CD8-positive, alpha-beta T cell (primary cell): ENCODE measurements at regions of chr9 and their contacts with region 1.

Region 1: DNA sequence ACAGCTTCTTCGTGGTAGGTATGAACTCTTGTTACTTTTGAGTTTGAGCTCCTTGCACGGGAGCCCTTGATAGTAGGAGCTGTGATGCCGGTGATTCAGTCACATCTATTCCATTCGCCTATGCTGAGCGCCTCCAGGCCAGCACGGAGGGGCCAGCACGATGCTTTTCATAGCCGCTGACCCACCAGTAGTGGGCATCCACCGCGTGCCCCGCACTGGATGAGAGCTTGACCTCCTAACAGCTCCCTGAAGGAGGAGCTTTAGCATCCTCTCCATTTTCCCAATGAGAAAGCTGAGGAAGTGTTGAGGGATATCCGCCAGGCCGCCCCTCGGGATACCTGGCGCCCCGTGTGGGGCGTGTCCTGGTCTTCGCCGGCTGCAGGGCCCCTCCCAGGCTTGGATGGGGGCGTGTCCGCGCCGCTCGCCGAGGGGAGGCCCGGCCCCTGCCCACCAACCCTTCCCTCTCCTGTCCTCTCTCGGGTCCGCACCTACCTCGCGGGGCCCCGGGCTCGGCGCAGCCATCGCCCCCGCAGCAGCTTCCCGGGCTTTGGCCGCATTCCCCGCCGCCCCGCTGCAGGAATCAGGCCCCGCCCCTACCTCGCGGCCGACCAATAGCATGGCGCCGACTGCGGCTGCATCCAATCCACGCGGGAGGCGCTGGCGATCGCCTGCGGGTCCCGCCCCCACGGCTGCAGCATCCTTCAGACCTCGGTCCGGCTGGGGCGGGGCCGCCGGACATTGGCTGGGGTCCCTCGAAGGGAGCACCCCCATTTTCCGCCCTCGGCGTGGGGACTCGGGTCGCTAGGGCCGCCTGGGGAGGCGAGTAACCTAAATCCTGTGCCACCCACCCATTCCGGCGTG is at the start of gene PIP5KL1:
- DNase-seq: peak; percentile 45 to 83 (median 68)
- ATAC-seq: peak; percentile 60
- H3K4me3 ChIP-seq: peak within 1 kb of the TSS; percentile 40 to 53
- H3K4me3 Mint-ChIP-seq: peak within 1 kb of the TSS; percentile 69
- H3K27ac ChIP-seq: no peak within 1 kb of the TSS
- H3K27ac Mint-ChIP-seq: peak within 1 kb of the TSS; percentile 71
- H3K4me1 ChIP-seq: peaks cover 36% of the 10 kb centered on the region
- H3K4me1 Mint-ChIP-seq: peaks cover 35% of the 10 kb centered on the region
- H3K27me3 ChIP-seq: peaks cover 0 to 5% of the 10 kb centered on the region in 2 experiments
- H3K27me3 Mint-ChIP-seq: no peaks in the 10 kb centered on the region
- CTCF ChIP-seq: no peak
- total RNA-seq, gene PIP5KL1: 5.1 to 7.4 TPM

Region 2: GRCh38 chr9:126599047-126599650 is 1331.3 kb before region 1 on chr9:
- CTCF ChIA-PET with region 1: no interaction called
- POLR2A ChIA-PET with region 1: no interaction called
- intact Hi-C with region 1: no loop called
- DNase-seq: no peak
- ATAC-seq: no peak
- H3K4me3 ChIP-seq: no peak overlapping the region
- H3K4me3 Mint-ChIP-seq: no peak overlapping the region
- H3K27ac ChIP-seq: no peak overlapping the region
- H3K27ac Mint-ChIP-seq: no peak overlapping the region
- H3K4me1 ChIP-seq: no peaks in the 10 kb centered on the region
- H3K4me1 Mint-ChIP-seq: no peaks in the 10 kb centered on the region
- H3K27me3 ChIP-seq: peaks cover 0 to 11% of the 10 kb centered on the region in 2 experiments
- H3K27me3 Mint-ChIP-seq: peaks cover 52% of the 10 kb centered on the region
- CTCF ChIP-seq: no peak

Region 3: GRCh38 chr9:128081056-128081455 is 150.6 kb after region 1 on chr9:
- CTCF ChIA-PET with region 1: no interaction called
- POLR2A ChIA-PET with region 1: no interaction called
- intact Hi-C with region 1: loop called in 1 of 2 experiments (anchors 5 kb)
- DNase-seq: no peak
- ATAC-seq: no peak
- H3K4me3 ChIP-seq: no peak overlapping the region
- H3K4me3 Mint-ChIP-seq: no peak overlapping the region
- H3K27ac ChIP-seq: peak overlapping the region in 1 of 2 experiments; percentile 19
- H3K27ac Mint-ChIP-seq: peak overlapping the region; percentile 46
- H3K4me1 ChIP-seq: peaks cover 19% of the 10 kb centered on the region
- H3K4me1 Mint-ChIP-seq: peaks cover 49% of the 10 kb centered on the region
- H3K27me3 ChIP-seq: no peaks in the 10 kb centered on the region
- H3K27me3 Mint-ChIP-seq: no peaks in the 10 kb centered on the region
- CTCF ChIP-seq: no peak

Region 4: DNA sequence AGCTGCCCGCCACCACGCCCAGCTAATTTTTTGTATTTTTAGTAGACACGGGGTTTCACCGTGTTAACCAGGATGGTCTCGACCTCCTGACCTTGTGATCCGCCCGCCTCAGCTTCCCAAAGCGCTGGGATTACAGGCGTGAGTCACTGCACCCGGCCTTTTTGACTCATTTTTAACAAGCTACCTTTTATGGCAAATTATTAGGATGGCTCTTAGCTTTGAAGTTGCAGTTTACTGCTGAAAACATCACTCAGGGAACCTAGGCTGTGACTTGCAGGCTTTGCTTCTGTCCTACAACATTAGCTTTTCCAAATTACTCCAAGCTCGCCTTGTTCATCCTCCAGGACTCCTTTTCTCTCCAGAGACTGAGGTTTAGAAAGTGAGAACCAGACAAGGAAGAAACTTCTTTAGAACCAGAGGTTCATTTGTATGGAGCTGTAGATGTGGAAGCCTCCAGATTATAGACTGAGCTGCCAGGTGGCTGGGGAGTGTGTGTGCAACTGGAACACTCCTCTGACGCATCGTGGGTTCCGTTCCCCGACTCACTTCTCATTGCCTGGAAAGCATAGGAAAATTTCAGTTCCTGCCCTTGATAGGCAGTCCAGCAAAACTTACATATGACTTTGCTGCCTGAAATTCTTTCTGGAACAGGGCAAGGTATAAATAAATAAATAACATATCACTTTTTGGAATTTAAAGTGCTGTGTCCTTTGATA is 598.1 kb after region 1 on chr9:
- CTCF ChIA-PET with region 1: no interaction called
- POLR2A ChIA-PET with region 1: no interaction called
- intact Hi-C with region 1: no loop called
- DNase-seq: no peak
- ATAC-seq: no peak
- H3K4me3 ChIP-seq: no peak overlapping the region
- H3K4me3 Mint-ChIP-seq: no peak overlapping the region
- H3K27ac ChIP-seq: no peak overlapping the region
- H3K27ac Mint-ChIP-seq: no peak overlapping the region
- H3K4me1 ChIP-seq: no peaks in the 10 kb centered on the region
- H3K4me1 Mint-ChIP-seq: no peaks in the 10 kb centered on the region
- H3K27me3 ChIP-seq: no peaks in the 10 kb centered on the region
- H3K27me3 Mint-ChIP-seq: no peaks in the 10 kb centered on the region
- CTCF ChIP-seq: no peak